ENCODE measurements at regions of chrX and their contacts with region 1.

Region 1: DNA sequence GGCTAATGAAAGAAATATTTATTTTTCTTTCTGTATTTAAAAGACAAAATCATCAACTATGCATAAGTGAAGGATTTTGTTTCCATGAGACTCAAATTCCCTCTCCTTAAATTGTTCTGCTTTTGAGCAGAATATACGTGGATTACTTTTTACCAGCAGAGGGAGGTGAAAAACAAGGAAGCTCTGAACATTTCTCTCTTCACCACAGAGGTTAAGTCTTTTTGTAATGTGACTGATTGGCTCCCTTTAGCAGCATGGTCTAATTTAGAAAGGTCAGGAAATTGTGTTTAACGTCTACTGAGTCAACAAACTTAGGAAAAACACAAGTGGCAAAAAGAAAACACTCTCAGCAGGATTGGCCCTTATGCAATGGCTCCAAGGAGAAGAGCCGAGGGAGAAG is 55.1 kb upstream of the F9 start:
- DNase-seq: no peak
- ATAC-seq: peak; percentile 47 to 59 (median 52)
- H3K4me3 ChIP-seq: no peak overlapping the region
- H3K27ac ChIP-seq: no peak overlapping the region
- H3K4me1 ChIP-seq: no peaks in the 10 kb centered on the region
- H3K27me3 ChIP-seq: no peaks in the 10 kb centered on the region
- CTCF ChIP-seq: peak; percentile 12 to 37 (median 35)
- POLR2A ChIP-seq: no peak

Region 2: DNA sequence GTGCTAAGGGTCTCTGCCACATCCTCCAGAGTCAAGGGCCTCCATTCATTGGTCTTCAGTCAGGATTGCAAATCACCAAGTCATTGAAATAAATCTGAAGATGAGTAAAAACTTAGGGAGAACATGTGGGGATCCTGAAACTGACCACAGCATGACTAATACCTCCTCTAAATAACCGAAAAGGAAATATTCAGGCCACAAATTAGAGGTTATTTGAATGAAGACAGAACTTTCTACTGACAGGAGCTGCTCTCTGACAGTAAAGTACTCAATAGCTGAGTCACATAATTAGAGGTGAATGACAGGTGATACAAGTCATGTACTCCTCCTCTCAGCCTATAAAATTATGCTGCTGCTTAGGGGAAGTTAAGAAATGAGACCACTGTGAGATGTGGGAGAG is 185.1 kb before region 1 on chrX:
- intact Hi-C with region 1: no loop called
- DNase-seq: no peak
- ATAC-seq: no peak
- H3K4me3 ChIP-seq: no peak overlapping the region
- H3K27ac ChIP-seq: no peak overlapping the region
- H3K4me1 ChIP-seq: peaks cover 0 to 13% (median 5%) of the 10 kb centered on the region in 4 donors
- H3K27me3 ChIP-seq: no peaks in the 10 kb centered on the region
- CTCF ChIP-seq: no peak
- POLR2A ChIP-seq: no peak

Region 3: DNA sequence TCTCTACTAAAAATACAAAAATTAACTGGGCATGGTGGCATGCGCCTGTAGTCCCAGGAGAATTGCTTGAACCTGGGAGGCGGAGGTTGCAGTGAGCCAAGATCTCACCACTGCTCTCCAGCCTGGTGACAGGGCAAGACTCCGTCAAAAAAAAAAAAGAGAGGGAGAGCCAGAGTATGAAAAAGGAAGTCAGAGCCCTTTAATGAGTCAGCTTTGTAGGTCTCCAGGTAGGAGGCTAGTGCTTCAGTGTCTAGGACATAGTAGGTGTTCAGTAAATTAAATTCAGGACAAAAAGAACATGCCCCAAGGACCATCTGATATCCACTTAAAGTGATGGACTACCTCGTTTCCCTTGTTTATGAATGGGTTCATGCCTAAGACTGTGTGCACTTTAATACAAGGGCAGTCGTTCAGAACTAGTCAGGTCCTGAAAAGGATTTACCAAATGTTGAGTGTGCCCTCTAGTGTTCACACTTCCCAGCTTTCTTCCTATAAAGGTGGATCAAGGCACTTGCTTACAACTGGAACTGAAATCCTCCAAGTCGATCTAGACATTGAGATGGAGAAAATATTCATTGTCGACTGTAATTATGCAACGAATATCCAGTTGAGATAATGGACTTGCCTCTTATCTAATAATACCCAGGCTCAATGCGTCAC is 84.1 kb after region 1 on chrX:
- intact Hi-C with region 1: loop called in 1 of 2 experiments (anchors 10 kb)
- DNase-seq: no peak
- ATAC-seq: peak; percentile 82 to 94 (median 86)
- H3K4me3 ChIP-seq: no peak overlapping the region
- H3K27ac ChIP-seq: no peak overlapping the region
- H3K4me1 ChIP-seq: no peaks in the 10 kb centered on the region
- H3K27me3 ChIP-seq: no peaks in the 10 kb centered on the region
- CTCF ChIP-seq: peak; percentile 61 to 67 (median 66)
- POLR2A ChIP-seq: no peak

Region 4: DNA sequence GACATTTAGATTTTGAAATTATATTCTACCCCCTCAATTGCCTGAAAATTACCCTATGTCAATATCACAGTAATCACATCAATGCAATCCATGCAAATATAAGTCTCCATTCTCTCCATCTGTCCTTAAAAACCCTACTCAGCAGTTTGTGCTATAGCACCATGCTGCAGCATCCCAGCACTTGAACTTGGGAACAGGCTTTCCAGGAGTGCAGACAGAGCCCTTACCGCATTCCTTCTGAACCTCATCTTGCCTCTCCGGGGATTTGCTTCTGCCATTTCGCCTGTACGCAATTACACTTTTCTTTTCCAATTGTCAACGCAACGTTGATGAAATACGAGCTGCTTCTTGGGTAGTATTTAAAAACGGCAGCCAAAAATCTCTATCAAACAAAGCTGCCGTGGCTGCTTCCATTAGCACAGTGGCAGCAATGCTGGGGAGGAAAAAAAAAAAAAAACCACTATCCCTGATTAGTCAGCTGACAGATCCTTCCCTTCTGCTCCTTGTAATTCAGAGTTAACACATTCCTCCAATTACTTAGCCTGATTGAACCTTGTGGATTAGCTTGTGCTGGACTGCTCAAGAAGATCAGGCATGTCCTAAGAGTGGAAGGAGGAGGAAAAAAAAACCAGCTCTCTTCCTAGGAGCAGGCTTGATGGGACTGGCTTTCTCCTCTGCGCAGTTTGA is 167.0 kb after region 1 on chrX:
- intact Hi-C with region 1: no loop called
- DNase-seq: no peak
- ATAC-seq: no peak
- H3K4me3 ChIP-seq: no peak overlapping the region
- H3K27ac ChIP-seq: no peak overlapping the region
- H3K4me1 ChIP-seq: no peaks in the 10 kb centered on the region
- H3K27me3 ChIP-seq: no peaks in the 10 kb centered on the region
- CTCF ChIP-seq: no peak
- POLR2A ChIP-seq: no peak

Region 5: GRCh38 chrX:140355922-140356321 is 880.5 kb after region 1 on chrX:
- intact Hi-C with region 1: no loop called
- DNase-seq: no peak
- ATAC-seq: no peak
- H3K4me3 ChIP-seq: no peak overlapping the region
- H3K27ac ChIP-seq: no peak overlapping the region
- H3K4me1 ChIP-seq: no peaks in the 10 kb centered on the region
- H3K27me3 ChIP-seq: no peaks in the 10 kb centered on the region
- CTCF ChIP-seq: no peak
- POLR2A ChIP-seq: no peak

Measured in right lobe of liver (tissue), 6 donors.